Heart right ventricle (tissue), 16 donors: ENCODE measurements at regions of chr4 and their contacts with region 1.

Region 1: GRCh38 chr4:23373261-23373660 is 516.6 kb downstream of the PPARGC1A start:
- DNase-seq: peak in 1 of 2 donors; percentile 71
- ATAC-seq: peak; percentile 65 to 96 (median 92)
- H3K4me3 ChIP-seq: no peak overlapping the region
- H3K27ac ChIP-seq: peak overlapping the region; percentile 36 to 83 (median 60)
- H3K4me1 ChIP-seq: peaks cover 0 to 35% (median 5%) of the 10 kb centered on the region in 9 donors
- H3K27me3 ChIP-seq: no peaks in the 10 kb centered on the region
- CTCF ChIP-seq: no peak

Region 2: GRCh38 chr4:23441530-23442069 is 68.3 kb after region 1 on chr4:
- intact Hi-C with region 1: loop called in 1 of 10 experiments (anchors 5 kb)
- DNase-seq: no peak
- ATAC-seq: no peak
- H3K4me3 ChIP-seq: no peak overlapping the region
- H3K27ac ChIP-seq: no peak overlapping the region
- H3K4me1 ChIP-seq: no peaks in the 10 kb centered on the region
- H3K27me3 ChIP-seq: no peaks in the 10 kb centered on the region
- CTCF ChIP-seq: no peak

Region 3: GRCh38 chr4:23455456-23456158 is 82.3 kb after region 1 on chr4:
- intact Hi-C with region 1: loop called in 2 of 10 experiments (anchors 2 to 5 kb)
- DNase-seq: peak in 1 of 2 donors; percentile 51
- ATAC-seq: peak; percentile 65 to 91 (median 86)
- H3K4me3 ChIP-seq: no peak overlapping the region
- H3K27ac ChIP-seq: peak overlapping the region in 7 of 10 donors; percentile 0 to 46 (median 39)
- H3K4me1 ChIP-seq: peaks cover 0 to 33% (median 12%) of the 10 kb centered on the region in 9 donors
- H3K27me3 ChIP-seq: no peaks in the 10 kb centered on the region
- CTCF ChIP-seq: peak in 6 of 9 donors; percentile 17 to 48 (median 40)